Activated T-helper 2 cell treated with anti-CD3 and anti-CD28 coated beads, Interferon-gamma antibody, Interleukin-2, Interleukin-4, amounts not matched to agents 10 μg/mL and 5 μg/mL and 100 μg/mL, durations not matched to agents 14 hours and 24 hours and 36 hours (primary cell): ENCODE measurements at regions of chr1 and their contacts with region 1.

Region 1: GRCh38 chr1:218164111-218164929 is 120.8 kb upstream of the RRP15 start:
- DNase-seq: peak; percentile 9
- H3K4me3 Mint-ChIP-seq: peak overlapping the region; percentile 46
- H3K27ac Mint-ChIP-seq: no peak overlapping the region
- H3K4me1 Mint-ChIP-seq: peaks cover 6% of the 10 kb centered on the region
- H3K27me3 Mint-ChIP-seq: peaks cover 60% of the 10 kb centered on the region

Region 2: GRCh38 chr1:217134857-217135568 is 1029.3 kb before region 1 on chr1:
- intact Hi-C with region 1: loop called (anchors 5 kb)
- DNase-seq: no peak
- H3K4me3 Mint-ChIP-seq: no peak overlapping the region
- H3K27ac Mint-ChIP-seq: no peak overlapping the region
- H3K4me1 Mint-ChIP-seq: peaks cover 2% of the 10 kb centered on the region
- H3K27me3 Mint-ChIP-seq: peaks cover 65% of the 10 kb centered on the region

Region 3: GRCh38 chr1:218345673-218346390 is 181.5 kb after region 1 on chr1:
- intact Hi-C with region 1: loop called (anchors 2 kb)
- DNase-seq: no peak
- H3K4me3 Mint-ChIP-seq: peak overlapping the region; percentile 67
- H3K27ac Mint-ChIP-seq: no peak overlapping the region
- H3K4me1 Mint-ChIP-seq: peaks cover 16% of the 10 kb centered on the region
- H3K27me3 Mint-ChIP-seq: peaks cover 63% of the 10 kb centered on the region